ENCODE measurements at regions of chr16 and their contacts with region 1.

Region 1: DNA sequence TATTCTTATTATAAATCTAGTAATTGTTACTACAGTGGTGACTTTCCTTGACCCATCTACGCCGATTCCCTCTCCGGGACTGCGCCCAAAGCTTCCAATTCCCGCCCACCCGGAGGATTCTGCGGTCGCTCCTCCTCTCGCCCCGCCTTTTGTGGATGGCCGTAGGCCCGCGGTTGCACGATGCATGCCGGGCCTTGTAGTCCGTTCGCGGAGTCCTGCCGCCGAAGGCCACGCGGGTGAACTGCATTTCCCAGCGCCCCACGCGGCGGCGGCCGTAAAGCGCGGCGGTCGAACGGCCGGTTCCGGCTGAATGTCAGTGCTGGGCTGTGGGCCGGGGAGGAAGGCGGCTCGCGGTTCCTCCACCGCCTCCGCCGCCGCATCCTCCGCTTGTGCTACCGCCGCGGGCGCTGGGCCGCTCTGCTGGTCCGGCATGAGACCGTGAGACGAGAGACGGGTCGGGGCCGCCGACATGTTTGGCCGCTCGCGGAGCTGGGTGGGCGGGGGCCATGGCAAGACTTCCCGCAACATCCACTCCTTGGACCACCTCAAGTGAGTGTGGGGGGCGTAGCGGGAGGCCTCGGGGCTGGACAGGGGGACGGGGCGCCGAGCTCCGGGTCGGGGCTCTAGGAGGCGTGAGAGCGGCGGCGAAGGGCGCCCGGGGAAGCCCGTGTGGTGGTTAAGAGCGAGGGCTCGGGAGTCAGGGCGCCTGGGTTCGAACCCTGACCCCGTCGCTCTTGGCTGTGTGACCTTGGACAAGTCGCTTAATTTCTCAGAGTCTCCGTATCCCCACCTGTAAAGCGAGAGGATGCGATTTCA is at the start of gene CLEC16A:
- DNase-seq: peak; percentile 92 to 97 (median 94)
- ATAC-seq: peak; percentile 86
- H3K4me3 ChIP-seq: peak within 1 kb of the TSS; percentile 82
- H3K4me3 Mint-ChIP-seq: peak within 1 kb of the TSS; percentile 83 to 96 (median 92)
- H3K27ac ChIP-seq: peak within 1 kb of the TSS; percentile 88
- H3K27ac Mint-ChIP-seq: peak within 1 kb of the TSS; percentile 41 to 92 (median 81)
- H3K4me1 ChIP-seq: peaks cover 34 to 53% of the 10 kb centered on the region in 2 donors
- H3K4me1 Mint-ChIP-seq: peaks cover 43 to 85% (median 70%) of the 10 kb centered on the region in 7 donors
- H3K27me3 ChIP-seq: no peaks in the 10 kb centered on the region
- H3K27me3 Mint-ChIP-seq: no peaks in the 10 kb centered on the region
- total RNA-seq, gene CLEC16A: 28.2 to 38.2 (median 34.0) TPM

Region 2: GRCh38 chr16:10385725-10386516 is 558.5 kb before region 1 on chr16 and contains the start of gene ATF7IP2:
- CTCF ChIA-PET with region 1: no interaction called
- POLR2A ChIA-PET with region 1: no interaction called
- intact Hi-C with region 1: loop called in 1 of 2 experiments (anchors 5 kb)
- DNase-seq: peak; percentile 68 to 85 (median 83)
- ATAC-seq: peak; percentile 99
- H3K4me3 ChIP-seq: peak within 1 kb of the TSS; percentile 67
- H3K4me3 Mint-ChIP-seq: peak within 1 kb of the TSS; percentile 89 to 99 (median 98)
- H3K27ac ChIP-seq: peak within 1 kb of the TSS; percentile 84
- H3K27ac Mint-ChIP-seq: peak within 1 kb of the TSS; percentile 90 to 99 (median 97)
- H3K4me1 ChIP-seq: peaks cover 14 to 16% of the 10 kb centered on the region in 2 donors
- H3K4me1 Mint-ChIP-seq: peaks cover 31 to 52% (median 47%) of the 10 kb centered on the region in 7 donors
- H3K27me3 ChIP-seq: no peaks in the 10 kb centered on the region
- H3K27me3 Mint-ChIP-seq: peaks cover 0 to 3% (median 0%) of the 10 kb centered on the region in 5 donors
- total RNA-seq, gene ATF7IP2: 56.5 to 75.5 (median 67.1) TPM

Region 3: GRCh38 chr16:10964039-10964890 is 19.8 kb after region 1 on chr16:
- CTCF ChIA-PET with region 1: interaction called, 17 read pairs
- POLR2A ChIA-PET with region 1: interaction called, 5 read pairs
- intact Hi-C with region 1: loop called in 1 of 2 experiments (anchors 1 kb)
- DNase-seq: peak; percentile 55 to 84 (median 69)
- ATAC-seq: peak; percentile 81
- H3K4me3 ChIP-seq: peak overlapping the region; percentile 3
- H3K4me3 Mint-ChIP-seq: peak overlapping the region in 6 of 10 donors; percentile 4 to 83 (median 52)
- H3K27ac ChIP-seq: no peak overlapping the region
- H3K27ac Mint-ChIP-seq: peak overlapping the region in 6 of 9 donors; percentile 47 to 91 (median 72)
- H3K4me1 ChIP-seq: peaks cover 11 to 18% of the 10 kb centered on the region in 2 donors
- H3K4me1 Mint-ChIP-seq: peaks cover 15 to 62% (median 28%) of the 10 kb centered on the region in 7 donors
- H3K27me3 ChIP-seq: no peaks in the 10 kb centered on the region
- H3K27me3 Mint-ChIP-seq: no peaks in the 10 kb centered on the region

Region 4: DNA sequence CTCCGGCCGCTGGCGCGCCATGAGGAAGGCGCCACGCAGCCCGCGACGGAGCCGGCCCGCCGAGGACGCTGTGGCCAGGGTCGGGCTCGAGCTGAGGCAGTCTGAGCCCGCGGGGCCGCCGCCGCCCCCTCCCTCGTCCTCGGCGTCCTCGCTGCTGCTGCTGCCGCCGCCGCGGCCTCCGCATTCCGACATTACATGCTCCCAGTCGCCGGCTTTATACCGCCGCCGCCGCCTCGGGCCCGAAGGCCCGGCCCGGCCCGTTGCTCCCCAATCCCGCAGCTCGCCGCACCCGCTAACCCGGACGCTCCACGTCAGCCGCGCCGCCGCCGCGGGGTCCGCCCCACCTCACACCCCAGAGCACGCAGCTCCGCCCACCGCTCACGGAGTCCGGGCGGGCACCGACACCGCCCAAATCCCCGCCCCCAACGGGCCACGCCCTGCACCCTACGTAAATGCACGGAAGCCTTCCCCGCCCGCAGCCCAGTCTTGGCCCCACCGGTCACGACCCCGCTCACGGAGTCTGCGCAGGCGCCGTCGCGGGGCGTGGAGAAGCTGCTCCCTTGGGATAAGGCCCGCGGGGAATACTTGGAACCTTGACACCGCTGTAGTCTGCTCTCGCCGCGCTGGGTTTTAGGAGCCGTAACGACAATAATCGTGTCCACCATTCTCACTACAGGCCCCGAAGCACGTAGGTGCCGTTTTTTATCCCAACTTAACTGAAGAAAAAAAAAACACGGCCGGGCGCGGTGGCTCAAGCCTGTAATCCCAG is 798.3 kb after region 1 on chr16 and contains the start of gene TXNDC11:
- CTCF ChIA-PET with region 1: no interaction called
- POLR2A ChIA-PET with region 1: interaction called, 3 read pairs
- intact Hi-C with region 1: loop called (anchors 1 to 2 kb)
- DNase-seq: peak; percentile 98 to 100 (median 100)
- ATAC-seq: peak; percentile 98
- H3K4me3 ChIP-seq: peak within 1 kb of the TSS; percentile 92
- H3K4me3 Mint-ChIP-seq: peak within 1 kb of the TSS; percentile 91 to 98 (median 94)
- H3K27ac ChIP-seq: peak within 1 kb of the TSS; percentile 90
- H3K27ac Mint-ChIP-seq: peak within 1 kb of the TSS; percentile 91 to 99 (median 98)
- H3K4me1 ChIP-seq: peaks cover 26 to 28% of the 10 kb centered on the region in 2 donors
- H3K4me1 Mint-ChIP-seq: peaks cover 39 to 55% (median 51%) of the 10 kb centered on the region in 7 donors
- H3K27me3 ChIP-seq: no peaks in the 10 kb centered on the region
- H3K27me3 Mint-ChIP-seq: no peaks in the 10 kb centered on the region
- total RNA-seq, gene TXNDC11: 41.2 to 80.5 (median 55.1) TPM

Region 5: DNA sequence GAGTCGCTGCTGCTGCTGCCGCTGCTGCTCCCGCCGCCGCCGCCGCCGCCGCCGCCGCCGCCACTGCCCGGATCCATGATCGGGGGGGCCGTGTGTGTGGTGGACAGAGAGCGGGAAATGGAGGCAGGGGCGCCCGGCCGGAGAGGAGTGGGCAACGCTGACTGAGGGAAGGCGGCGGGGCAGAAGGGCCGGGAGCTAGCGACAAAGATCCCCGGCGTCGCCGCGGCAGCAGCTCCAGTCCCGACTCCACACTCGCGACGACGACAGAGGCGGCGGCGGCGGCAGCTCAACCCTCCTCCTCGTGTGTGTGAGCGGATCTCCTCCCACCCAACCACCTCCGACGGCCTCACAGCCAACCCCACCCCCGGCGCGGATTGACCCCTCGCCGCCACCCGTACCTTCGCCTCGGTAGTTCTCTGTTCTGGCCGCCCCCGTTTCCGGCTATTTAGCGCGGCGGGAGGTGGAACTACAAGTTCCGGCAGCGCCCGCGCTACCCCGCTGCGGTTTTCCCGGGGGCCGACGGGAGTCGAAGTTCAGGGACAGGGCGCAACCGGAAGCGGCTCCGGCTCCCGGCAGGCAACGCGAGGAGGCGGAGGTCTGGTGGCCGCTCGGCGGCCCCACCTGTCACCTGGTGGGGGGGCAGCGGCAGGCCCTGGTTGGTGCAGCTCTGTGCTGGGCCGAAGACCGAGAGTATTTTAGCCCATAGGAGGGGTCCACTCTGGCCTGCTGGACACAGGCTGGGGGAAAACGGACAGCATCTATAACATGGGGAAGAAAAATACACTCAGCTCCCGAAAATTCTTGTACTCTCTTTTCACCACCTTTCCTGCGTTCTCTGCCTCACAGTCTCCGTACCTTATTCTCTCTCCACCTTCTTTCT is 971.4 kb after region 1 on chr16 and contains the start of gene GSPT1:
- CTCF ChIA-PET with region 1: no interaction called
- POLR2A ChIA-PET with region 1: no interaction called
- intact Hi-C with region 1: loop called (anchors 1 kb)
- DNase-seq: peak; percentile 96 to 100 (median 99)
- ATAC-seq: peak; percentile 94
- H3K4me3 ChIP-seq: peak within 1 kb of the TSS; percentile 74
- H3K4me3 Mint-ChIP-seq: peak within 1 kb of the TSS; percentile 85 to 99 (median 96)
- H3K27ac ChIP-seq: peak within 1 kb of the TSS; percentile 87
- H3K27ac Mint-ChIP-seq: peak within 1 kb of the TSS; percentile 87 to 98 (median 95)
- H3K4me1 ChIP-seq: peaks cover 13 to 24% of the 10 kb centered on the region in 2 donors
- H3K4me1 Mint-ChIP-seq: peaks cover 23 to 37% (median 34%) of the 10 kb centered on the region in 7 donors
- H3K27me3 ChIP-seq: no peaks in the 10 kb centered on the region
- H3K27me3 Mint-ChIP-seq: peaks cover 0 to 10% (median 0%) of the 10 kb centered on the region in 5 donors
- total RNA-seq, gene GSPT1: 92.8 to 148 (median 101) TPM

Region 6: GRCh38 chr16:12803203-12804097 is 1859.0 kb after region 1 on chr16 and contains the start of gene CPPED1:
- CTCF ChIA-PET with region 1: no interaction called
- POLR2A ChIA-PET with region 1: no interaction called
- intact Hi-C with region 1: loop called in 1 of 2 experiments (anchors 5 kb)
- DNase-seq: peak; percentile 85 to 98 (median 91)
- ATAC-seq: peak; percentile 95
- H3K4me3 ChIP-seq: peak within 1 kb of the TSS; percentile 76
- H3K4me3 Mint-ChIP-seq: peak within 1 kb of the TSS; percentile 86 to 96 (median 90)
- H3K27ac ChIP-seq: peak within 1 kb of the TSS; percentile 71
- H3K27ac Mint-ChIP-seq: peak within 1 kb of the TSS; percentile 59 to 92 (median 91)
- H3K4me1 ChIP-seq: peaks cover 3 to 9% of the 10 kb centered on the region in 2 donors
- H3K4me1 Mint-ChIP-seq: peaks cover 9 to 37% (median 22%) of the 10 kb centered on the region in 7 donors
- H3K27me3 ChIP-seq: no peaks in the 10 kb centered on the region
- H3K27me3 Mint-ChIP-seq: peaks cover 0 to 8% (median 0%) of the 10 kb centered on the region in 5 donors
- total RNA-seq, gene CPPED1: 2.4 to 56.5 (median 5.3) TPM